ENCODE measurements at regions of chr3 and their contacts with region 1.

Region 1: DNA sequence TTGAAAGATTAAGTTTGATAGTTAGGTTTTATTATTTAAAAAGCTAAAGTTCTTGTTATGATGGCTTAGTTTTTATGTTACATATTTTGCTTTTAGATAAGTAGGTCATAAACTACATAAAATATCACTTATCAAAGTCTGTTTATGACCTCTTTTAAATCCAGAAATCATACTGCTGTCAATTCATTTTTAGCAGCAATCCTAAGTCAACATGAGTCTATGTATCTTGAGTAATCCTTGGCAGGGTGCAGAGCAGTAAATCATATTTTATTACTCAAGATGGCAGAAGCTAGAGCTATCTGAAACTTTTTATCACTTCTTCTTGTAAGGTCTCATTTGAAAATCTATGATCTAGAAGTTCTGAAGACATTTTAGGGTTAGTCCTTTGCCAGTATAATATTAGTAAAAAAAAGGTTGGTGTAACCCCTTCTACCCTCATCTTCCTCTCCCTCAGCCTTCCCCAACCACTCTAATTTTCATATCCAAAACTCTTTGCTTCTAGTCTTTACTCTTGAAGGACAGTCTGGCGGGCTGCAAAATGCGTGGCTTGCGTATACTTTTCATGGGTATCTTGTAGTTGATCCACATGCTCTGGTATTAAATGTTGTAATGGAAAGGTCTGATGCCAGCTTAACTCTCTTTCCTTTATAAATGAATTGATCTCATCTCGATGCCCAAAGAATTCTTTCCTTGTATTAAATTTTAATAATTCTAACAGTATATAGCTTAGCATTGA is 134.0 kb upstream of the THRB start:
- DNase-seq: no peak
- H3K4me3 ChIP-seq: no peak overlapping the region
- H3K27ac ChIP-seq: no peak overlapping the region
- H3K4me1 ChIP-seq: no peaks in the 10 kb centered on the region
- H3K27me3 ChIP-seq: no peaks in the 10 kb centered on the region
- CTCF ChIP-seq: no peak
- POLR2A ChIP-seq: no peak

Region 2: DNA sequence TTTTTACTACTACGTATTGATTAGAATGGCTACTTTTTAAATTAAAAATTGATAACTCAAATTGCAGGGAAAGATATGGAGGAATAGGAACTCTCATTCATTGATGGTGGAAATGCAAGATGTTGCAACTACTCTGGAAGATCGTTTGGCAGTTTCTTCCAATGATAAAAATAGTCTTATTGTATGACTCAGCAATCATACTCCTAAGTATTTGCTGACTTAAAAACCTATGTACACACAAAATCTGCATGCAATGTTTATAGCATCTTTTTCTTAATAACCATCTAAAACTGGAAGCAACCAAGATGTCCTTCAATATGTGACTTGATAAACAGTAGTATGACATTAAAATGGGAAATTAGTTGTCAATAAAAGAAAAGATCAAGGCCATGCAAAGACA is 1906.5 kb after region 1 on chr3:
- intact Hi-C with region 1: loop called (anchors 10 kb)
- DNase-seq: no peak
- H3K4me3 ChIP-seq: no peak overlapping the region
- H3K27ac ChIP-seq: no peak overlapping the region
- H3K4me1 ChIP-seq: no peaks in the 10 kb centered on the region
- H3K27me3 ChIP-seq: no peaks in the 10 kb centered on the region
- CTCF ChIP-seq: no peak
- POLR2A ChIP-seq: no peak